ENCODE measurements at regions of chr2 and their contacts with region 1.

Region 1: DNA sequence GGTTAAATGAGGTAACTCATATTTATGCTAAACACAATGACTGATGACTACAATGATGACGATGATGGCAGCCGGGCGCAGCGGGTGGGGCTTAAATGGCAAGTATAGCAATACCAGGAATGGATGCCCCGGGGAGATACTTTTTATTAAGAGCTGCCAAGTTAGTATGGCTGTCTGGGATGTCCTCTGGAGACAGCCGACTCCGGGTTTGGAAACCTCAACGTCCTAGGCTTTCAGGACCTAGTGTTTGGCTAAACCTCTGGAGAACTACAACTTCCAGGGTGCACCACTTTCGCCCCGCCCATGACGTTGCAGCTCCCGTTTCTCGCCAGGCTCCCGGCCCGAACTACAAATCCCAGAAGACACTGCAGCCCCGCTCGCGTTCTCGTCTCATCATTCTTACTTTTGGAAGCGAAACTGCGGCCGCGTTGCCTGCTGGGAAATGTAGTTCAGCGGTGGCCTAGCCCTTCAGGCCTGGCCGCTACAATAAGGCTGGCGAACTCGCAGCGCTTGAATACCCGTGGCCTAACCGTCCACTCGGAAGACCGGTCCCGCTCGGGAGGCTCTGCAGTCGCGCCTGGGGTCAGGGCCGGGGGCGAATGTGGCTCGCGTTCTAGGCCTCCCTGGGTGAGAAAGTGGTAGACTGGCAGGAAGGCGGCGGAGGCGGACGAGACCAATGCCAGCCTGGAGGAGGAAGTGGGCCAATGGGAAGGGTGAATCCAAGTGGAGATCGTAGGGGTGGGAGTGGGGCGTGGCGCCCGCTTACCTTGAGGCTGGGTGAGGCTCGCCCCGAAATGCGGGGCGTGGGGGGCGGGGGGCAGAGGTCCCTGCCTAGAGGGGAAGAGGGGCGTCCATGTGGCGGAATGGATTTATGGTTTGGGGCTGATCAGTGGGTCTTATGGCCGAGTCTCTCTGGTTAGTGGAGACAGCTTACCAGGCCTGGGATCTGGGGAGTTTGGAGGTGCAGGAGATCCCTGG is at the start of gene SMARCAL1:
- DNase-seq: peak; percentile 97
- H3K4me3 Mint-ChIP-seq: peak within 1 kb of the TSS; percentile 99
- H3K27ac Mint-ChIP-seq: peak within 1 kb of the TSS; percentile 89
- H3K4me1 Mint-ChIP-seq: peaks cover 19% of the 10 kb centered on the region
- H3K27me3 Mint-ChIP-seq: no peaks in the 10 kb centered on the region
- total RNA-seq, gene SMARCAL1: 28.0 and 29.1 TPM in 2 replicates

Region 2: GRCh38 chr2:214543386-214543965 is 1868.8 kb before region 1 on chr2:
- intact Hi-C with region 1: no loop called
- DNase-seq: no peak
- H3K4me3 Mint-ChIP-seq: no peak overlapping the region
- H3K27ac Mint-ChIP-seq: no peak overlapping the region
- H3K4me1 Mint-ChIP-seq: no peaks in the 10 kb centered on the region
- H3K27me3 Mint-ChIP-seq: no peaks in the 10 kb centered on the region

Region 3: DNA sequence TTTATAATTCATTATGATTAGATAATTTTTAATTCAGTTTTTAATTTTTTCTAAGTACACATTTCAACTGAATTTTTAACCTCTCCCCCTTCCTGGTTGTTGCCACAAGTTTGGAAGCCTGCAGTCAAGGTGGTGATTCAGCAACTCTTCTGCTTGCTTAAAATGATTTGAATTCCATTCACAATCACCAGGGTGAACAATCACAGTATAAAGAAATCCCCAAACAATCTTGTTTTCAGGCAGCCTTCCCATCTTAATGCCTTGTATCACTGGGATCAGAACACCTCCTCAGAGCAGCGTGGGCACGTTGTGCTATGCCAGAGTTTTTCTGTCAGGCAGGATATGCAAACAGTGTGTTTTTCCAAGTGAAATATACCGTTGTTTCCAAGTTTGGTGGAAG is 1556.2 kb before region 1 on chr2:
- intact Hi-C with region 1: no loop called
- DNase-seq: no peak
- H3K4me3 Mint-ChIP-seq: no peak overlapping the region
- H3K27ac Mint-ChIP-seq: no peak overlapping the region
- H3K4me1 Mint-ChIP-seq: no peaks in the 10 kb centered on the region
- H3K27me3 Mint-ChIP-seq: peaks cover 6% of the 10 kb centered on the region

Region 4: DNA sequence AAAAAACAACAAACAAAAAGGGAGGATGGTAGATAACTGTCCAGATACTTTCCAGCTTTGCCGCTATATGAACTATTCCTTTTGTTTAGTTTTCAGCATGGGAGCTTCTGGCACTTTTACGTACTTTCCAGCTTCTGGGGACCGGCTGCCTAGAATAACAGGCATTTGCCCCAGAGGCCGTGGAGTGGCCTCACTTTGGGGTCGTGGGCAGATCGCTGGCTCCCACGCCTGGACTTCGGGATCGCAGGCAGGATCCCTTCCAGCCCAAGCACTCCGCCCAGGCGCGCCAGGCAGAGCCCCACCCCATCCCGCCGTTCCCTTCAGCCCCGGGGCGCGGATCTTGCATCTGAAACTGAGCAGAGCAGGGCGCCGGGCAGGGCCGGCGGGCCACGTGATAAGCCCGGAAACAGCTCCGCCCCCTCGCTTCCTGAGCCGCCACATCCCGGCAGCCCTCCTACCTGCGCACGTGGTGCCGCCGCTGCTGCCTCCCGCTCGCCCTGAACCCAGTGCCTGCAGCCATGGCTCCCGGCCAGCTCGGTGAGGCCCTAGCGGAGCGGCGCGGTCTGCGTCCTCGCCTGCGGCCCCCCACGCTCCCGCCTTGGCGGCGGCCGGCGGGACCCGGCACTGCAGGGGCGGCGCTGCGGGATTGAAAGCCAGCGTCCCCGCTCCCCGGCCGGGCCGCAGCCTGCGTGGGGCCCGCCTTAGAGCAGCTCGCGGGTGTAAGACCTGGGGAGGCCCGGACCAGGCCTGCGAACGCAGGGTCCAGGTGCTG is 1100.5 kb before region 1 on chr2 and contains the start of gene ATIC:
- intact Hi-C with region 1: loop called (anchors 1 kb)
- DNase-seq: peak; percentile 90
- H3K4me3 Mint-ChIP-seq: peak within 1 kb of the TSS; percentile 97
- H3K27ac Mint-ChIP-seq: peak within 1 kb of the TSS; percentile 95
- H3K4me1 Mint-ChIP-seq: peaks cover 33% of the 10 kb centered on the region
- H3K27me3 Mint-ChIP-seq: no peaks in the 10 kb centered on the region
- total RNA-seq, gene ATIC: 287 and 299 TPM in 2 replicates

Region 5: GRCh38 chr2:216081487-216082116 is 330.7 kb before region 1 on chr2 and contains the starts of genes PECR and TMEM169:
- intact Hi-C with region 1: loop called (anchors 1 kb)
- DNase-seq: peak; percentile 74
- H3K4me3 Mint-ChIP-seq: peak within 1 kb of the TSS; percentile 99
- H3K27ac Mint-ChIP-seq: peak within 1 kb of the TSS; percentile 84
- H3K4me1 Mint-ChIP-seq: peaks cover 49% of the 10 kb centered on the region
- H3K27me3 Mint-ChIP-seq: no peaks in the 10 kb centered on the region
- total RNA-seq, gene PECR: 14.0 and 17.6 TPM in 2 replicates
- total RNA-seq, gene TMEM169: 0.93 and 2.2 TPM in 2 replicates

Region 6: DNA sequence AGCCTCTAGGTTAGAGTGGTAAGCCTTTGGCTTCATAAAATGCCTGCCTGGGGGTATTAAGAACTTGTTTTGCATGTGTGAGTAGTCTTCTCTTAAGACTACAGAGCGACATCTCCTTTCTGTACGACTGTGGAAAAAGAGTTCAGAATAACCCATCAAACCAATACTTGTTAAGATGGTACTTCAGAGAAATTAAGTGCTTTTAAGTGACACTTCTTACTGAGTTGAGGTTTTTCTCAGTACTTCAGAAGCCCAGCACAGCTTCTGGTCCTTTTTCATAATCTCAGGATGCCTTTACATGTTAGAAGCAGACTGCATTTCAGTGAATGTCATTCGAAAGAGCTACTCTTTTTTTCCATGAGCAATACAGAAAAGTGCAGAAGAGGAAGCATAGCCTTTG is 292.3 kb before region 1 on chr2:
- intact Hi-C with region 1: loop called (anchors 1 kb)
- DNase-seq: no peak
- H3K4me3 Mint-ChIP-seq: peak overlapping the region; percentile 78
- H3K27ac Mint-ChIP-seq: peak overlapping the region; percentile 95
- H3K4me1 Mint-ChIP-seq: peaks cover 78% of the 10 kb centered on the region
- H3K27me3 Mint-ChIP-seq: no peaks in the 10 kb centered on the region

Region 7: GRCh38 chr2:216498418-216499413 is 86.4 kb after region 1 on chr2 and contains the start of gene RPL37A:
- intact Hi-C with region 1: loop called (anchors 1 kb)
- DNase-seq: peak; percentile 87
- H3K4me3 Mint-ChIP-seq: peak within 1 kb of the TSS; percentile 93
- H3K27ac Mint-ChIP-seq: peak within 1 kb of the TSS; percentile 86
- H3K4me1 Mint-ChIP-seq: peaks cover 57% of the 10 kb centered on the region
- H3K27me3 Mint-ChIP-seq: no peaks in the 10 kb centered on the region
- total RNA-seq, gene RPL37A: 2,803 and 2,922 TPM in 2 replicates

Measured in activated T-helper 1 cell treated with anti-CD3 and anti-CD28 coated beads, Interleukin-12 subunit alpha, Interleukin-12 subunit beta, Interleukin-2, Interleukin-4 antibody, amounts not matched to agents 30 ng/mL and 10 ng/mL and 1 ng/mL, durations not matched to agents 14 hours and 24 hours and 36 hours (primary cell).